ENCODE measurements at regions of chr6 and their contacts with region 1.

Region 1: GRCh38 chr6:108896111-108896661 is 48.0 kb downstream of the ARMC2 start:
- DNase-seq: no peak
- H3K4me3 ChIP-seq: no peak overlapping the region
- H3K27ac ChIP-seq: no peak overlapping the region
- H3K4me1 ChIP-seq: peaks cover 16% of the 10 kb centered on the region
- CTCF ChIP-seq: no peak

Region 2: DNA sequence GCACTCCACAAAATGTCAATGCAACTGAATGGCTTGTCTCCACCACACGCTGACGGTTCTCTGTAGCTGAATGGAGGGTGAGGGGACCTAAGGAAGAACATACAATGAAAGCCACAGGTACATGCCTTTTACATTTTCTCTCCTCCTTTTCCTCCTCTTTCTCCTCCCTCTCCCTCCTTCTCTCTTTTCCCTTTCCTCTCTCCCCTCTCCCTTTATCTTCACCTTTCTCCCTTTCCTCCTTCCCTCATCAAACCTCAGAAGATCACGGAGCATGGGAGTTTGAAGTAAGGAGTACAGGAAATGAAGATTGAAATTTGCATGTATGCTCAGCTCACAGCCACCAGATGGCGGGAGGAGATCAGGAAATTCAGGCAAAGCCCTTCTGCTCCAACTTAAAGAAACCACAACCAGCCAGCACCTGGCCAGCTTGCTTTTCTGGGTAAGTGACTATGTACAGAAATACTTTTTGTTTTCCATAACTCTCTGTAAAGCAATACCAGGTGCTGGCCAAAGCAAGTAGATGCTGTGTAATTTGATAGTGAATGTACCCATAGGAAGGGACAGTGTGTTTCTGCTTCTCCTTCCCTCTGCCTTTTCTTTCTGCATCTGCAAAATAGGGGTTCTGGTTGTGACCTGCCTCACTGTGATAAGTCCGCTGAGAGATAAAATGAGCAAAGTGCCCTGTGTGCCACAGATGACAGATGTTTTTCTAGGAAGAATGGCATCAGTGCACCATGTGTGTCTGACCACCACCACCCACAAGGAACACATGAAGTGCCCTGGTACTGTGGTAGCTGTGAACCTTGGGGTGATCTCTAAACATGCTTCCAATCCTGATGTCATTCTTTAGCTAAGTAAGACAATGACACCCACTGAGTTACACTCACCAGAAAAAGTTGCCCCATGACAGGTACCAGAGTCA is 354.1 kb before region 1 on chr6:
- CTCF ChIA-PET with region 1: no interaction called
- POLR2A ChIA-PET with region 1: no interaction called
- intact Hi-C with region 1: loop called (anchors 1 kb)
- DNase-seq: peak; percentile 93
- H3K4me3 ChIP-seq: peak overlapping the region; percentile 33
- H3K27ac ChIP-seq: peak overlapping the region; percentile 57
- H3K4me1 ChIP-seq: peaks cover 24% of the 10 kb centered on the region
- CTCF ChIP-seq: peak; percentile 98

Region 3: DNA sequence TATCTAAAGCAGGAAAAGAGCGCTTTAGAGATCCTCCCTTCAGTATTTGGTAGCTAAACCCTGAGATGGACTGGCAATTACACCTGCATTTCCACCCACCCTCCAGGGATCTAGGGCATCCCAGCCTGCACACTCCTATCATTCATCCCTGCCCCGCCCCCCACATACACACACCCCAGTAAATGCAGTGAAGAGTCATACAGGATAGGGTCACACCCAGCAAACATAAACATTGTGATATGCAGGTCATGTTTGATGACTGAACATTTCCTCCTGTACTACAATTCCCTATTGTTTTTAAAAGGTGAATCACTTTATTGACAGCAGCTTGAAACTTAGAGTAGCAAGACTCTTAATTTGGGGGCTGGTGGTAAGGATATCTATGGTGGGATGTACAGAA is 222.6 kb before region 1 on chr6:
- CTCF ChIA-PET with region 1: no interaction called
- POLR2A ChIA-PET with region 1: no interaction called
- intact Hi-C with region 1: loop called (anchors 5 kb)
- DNase-seq: no peak
- H3K4me3 ChIP-seq: peak overlapping the region; percentile 4
- H3K27ac ChIP-seq: peak overlapping the region; percentile 44
- H3K4me1 ChIP-seq: peaks cover 40% of the 10 kb centered on the region
- CTCF ChIP-seq: no peak

Region 4: GRCh38 chr6:108782179-108783041 is 113.8 kb before region 1 on chr6:
- CTCF ChIA-PET with region 1: no interaction called
- POLR2A ChIA-PET with region 1: interaction called, 5 read pairs
- intact Hi-C with region 1: loop called (anchors 5 kb)
- DNase-seq: peak; percentile 80
- H3K4me3 ChIP-seq: peak overlapping the region; percentile 48
- H3K27ac ChIP-seq: no peak overlapping the region
- H3K4me1 ChIP-seq: peaks cover 17% of the 10 kb centered on the region
- CTCF ChIP-seq: peak; percentile 90

Region 5: DNA sequence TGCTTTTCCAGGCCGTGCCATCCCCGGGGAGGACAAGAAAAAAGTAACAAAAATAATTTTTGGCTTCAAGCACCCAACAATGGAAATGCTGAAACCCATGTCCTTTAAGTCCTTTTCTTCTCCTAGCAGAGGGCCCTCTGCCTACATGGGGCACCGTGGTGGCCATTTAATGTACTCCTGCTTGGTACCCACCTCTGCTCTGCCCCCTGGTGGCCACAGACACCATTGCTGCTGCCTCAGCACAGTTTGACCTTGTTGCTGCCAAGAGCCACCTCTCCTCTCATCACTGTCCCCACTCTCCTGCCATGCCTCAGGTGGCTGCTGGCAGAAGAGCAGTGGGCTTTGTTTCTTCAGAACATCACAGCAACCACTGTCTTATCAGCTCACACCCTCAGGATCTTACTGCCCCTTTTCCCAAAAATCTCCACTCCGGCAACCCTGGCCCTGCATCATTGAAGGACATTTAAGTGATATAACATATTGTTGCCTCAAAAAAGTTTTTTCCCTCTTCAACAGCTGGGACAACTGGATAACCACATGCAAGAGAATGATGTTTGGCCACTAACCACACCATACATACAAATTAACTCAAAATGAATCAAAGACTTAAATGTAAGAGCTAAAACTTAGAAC is 60.9 kb before region 1 on chr6:
- CTCF ChIA-PET with region 1: no interaction called
- POLR2A ChIA-PET with region 1: no interaction called
- intact Hi-C with region 1: loop called (anchors 2 kb)
- DNase-seq: peak; percentile 81
- H3K4me3 ChIP-seq: no peak overlapping the region
- H3K27ac ChIP-seq: no peak overlapping the region
- H3K4me1 ChIP-seq: peaks cover 17% of the 10 kb centered on the region
- CTCF ChIP-seq: peak; percentile 93

Region 6: DNA sequence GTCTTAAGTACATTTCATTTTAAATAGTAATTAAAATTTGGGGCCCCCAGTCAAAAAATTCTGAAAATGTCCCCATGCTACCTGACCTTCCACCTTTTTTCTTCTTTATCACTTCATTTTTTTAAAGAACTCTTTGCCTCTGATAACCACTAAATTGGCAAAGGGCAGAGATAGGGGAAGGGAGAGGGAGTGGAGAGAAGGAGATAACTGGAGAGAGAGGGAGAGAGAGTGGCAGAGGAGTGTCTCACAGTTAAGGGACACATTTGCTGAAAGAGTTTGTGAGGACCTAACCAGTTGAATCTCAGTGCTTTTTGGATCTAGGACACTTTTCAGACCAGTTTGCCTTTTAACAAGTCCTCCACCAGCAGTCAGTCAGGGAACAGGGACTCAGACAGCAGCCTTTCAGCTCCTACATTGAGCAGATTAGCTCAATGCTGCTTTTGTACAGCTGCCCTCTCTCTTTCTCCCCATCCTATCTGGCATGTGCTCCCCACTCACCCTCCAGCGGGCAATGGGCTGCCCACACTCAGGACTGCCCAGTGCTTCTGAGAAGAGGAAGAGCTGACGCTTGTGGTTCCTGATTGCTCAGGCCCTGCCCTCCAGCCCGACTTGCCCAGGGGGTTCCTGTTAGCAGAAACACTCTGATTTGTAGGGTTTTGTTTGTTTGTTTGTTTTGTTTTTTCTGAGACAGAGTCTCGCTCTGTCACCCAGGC is 33.6 kb before region 1 on chr6:
- CTCF ChIA-PET with region 1: no interaction called
- POLR2A ChIA-PET with region 1: no interaction called
- intact Hi-C with region 1: loop called (anchors 1 kb)
- DNase-seq: no peak
- H3K4me3 ChIP-seq: no peak overlapping the region
- H3K27ac ChIP-seq: no peak overlapping the region
- H3K4me1 ChIP-seq: no peaks in the 10 kb centered on the region
- CTCF ChIP-seq: no peak